Calu3 (cell line): ENCODE measurements at regions of chr5 and their contacts with region 1.

Region 1: GRCh38 chr5:169583424-169584204 is at the start of gene SPDL1:
- DNase-seq: peak; percentile 95
- H3K4me3 Mint-ChIP-seq: peak within 1 kb of the TSS; percentile 95
- H3K27ac Mint-ChIP-seq: peak within 1 kb of the TSS; percentile 90
- H3K4me1 Mint-ChIP-seq: peaks cover 26% of the 10 kb centered on the region
- H3K27me3 Mint-ChIP-seq: peaks cover 14% of the 10 kb centered on the region
- CTCF ChIP-seq: no peak
- total RNA-seq, gene SPDL1: 41.7 and 45.8 TPM in 2 replicates

Region 2: GRCh38 chr5:168579488-168580226 is 1004.0 kb before region 1 on chr5:
- CTCF ChIA-PET with region 1: no interaction called
- intact Hi-C with region 1: loop called (anchors 10 kb)
- DNase-seq: peak; percentile 99
- H3K4me3 Mint-ChIP-seq: peak overlapping the region; percentile 78
- H3K27ac Mint-ChIP-seq: peak overlapping the region; percentile 94
- H3K4me1 Mint-ChIP-seq: peaks cover 36% of the 10 kb centered on the region
- H3K27me3 Mint-ChIP-seq: peaks cover under 1% of the 10 kb centered on the region
- CTCF ChIP-seq: no peak

Region 3: DNA sequence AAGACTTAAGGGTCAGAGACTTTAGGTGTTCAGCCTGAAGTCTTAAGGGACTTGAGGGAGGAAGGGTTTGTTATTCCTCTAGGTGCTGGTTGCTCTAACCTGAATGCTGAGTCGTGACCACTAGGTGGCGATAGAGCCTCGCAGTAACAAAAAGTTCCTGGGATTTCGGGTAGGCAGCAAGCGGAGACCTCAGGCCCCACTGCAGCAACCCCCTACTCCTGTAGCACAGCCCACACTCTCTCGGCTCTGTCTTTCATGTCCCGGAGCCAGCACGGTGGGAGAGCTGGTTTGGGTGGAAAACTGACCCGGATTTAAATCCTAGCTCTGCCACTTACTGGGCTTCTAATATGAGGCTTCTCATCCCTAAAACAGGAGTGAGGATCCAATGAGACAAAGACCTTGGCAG is 904.1 kb before region 1 on chr5:
- CTCF ChIA-PET with region 1: no interaction called
- intact Hi-C with region 1: loop called (anchors 2 kb)
- DNase-seq: peak; percentile 79
- H3K4me3 Mint-ChIP-seq: no peak overlapping the region
- H3K27ac Mint-ChIP-seq: no peak overlapping the region
- H3K4me1 Mint-ChIP-seq: no peaks in the 10 kb centered on the region
- H3K27me3 Mint-ChIP-seq: peaks cover 13% of the 10 kb centered on the region
- CTCF ChIP-seq: peak; percentile 96

Region 4: DNA sequence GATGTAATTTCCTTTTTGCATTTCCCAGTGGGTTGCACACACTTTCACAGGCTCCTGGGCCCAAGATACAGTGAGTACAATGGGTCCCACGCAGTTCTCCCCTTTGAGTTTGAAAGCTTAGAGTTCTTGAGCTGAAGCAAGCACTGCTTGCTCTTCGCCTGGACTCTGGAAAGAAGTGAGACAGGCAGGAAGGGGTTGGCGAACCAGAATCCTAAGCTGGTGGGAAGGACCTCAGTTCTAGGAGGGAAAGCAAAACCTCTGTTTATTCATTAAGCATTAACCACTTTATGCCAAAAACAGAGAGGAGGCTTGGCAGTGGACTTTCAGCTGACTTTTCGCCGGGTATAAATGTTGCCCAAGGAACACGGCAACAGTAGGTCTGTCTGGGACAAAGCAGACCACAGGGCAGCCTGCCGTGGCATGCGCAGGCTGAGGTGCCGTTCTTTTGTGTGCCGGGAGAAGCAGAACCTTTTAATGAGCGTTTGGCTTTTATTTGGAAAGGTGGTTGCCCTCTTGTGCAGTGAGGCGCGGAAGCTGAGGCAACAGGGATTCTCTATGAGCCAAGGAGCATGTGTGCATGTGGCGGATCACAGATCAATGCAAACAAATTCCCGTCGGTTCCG is 764.5 kb before region 1 on chr5:
- CTCF ChIA-PET with region 1: no interaction called
- intact Hi-C with region 1: no loop called
- DNase-seq: no peak
- H3K4me3 Mint-ChIP-seq: no peak overlapping the region
- H3K27ac Mint-ChIP-seq: no peak overlapping the region
- H3K4me1 Mint-ChIP-seq: no peaks in the 10 kb centered on the region
- H3K27me3 Mint-ChIP-seq: peaks cover 100% of the 10 kb centered on the region
- CTCF ChIP-seq: no peak

Region 5: GRCh38 chr5:168947212-168947868 is 636.3 kb before region 1 on chr5:
- CTCF ChIA-PET with region 1: no interaction called
- intact Hi-C with region 1: loop called (anchors 2 kb)
- DNase-seq: peak; percentile 71
- H3K4me3 Mint-ChIP-seq: no peak overlapping the region
- H3K27ac Mint-ChIP-seq: no peak overlapping the region
- H3K4me1 Mint-ChIP-seq: no peaks in the 10 kb centered on the region
- H3K27me3 Mint-ChIP-seq: peaks cover 48% of the 10 kb centered on the region
- CTCF ChIP-seq: peak; percentile 80

Region 6: DNA sequence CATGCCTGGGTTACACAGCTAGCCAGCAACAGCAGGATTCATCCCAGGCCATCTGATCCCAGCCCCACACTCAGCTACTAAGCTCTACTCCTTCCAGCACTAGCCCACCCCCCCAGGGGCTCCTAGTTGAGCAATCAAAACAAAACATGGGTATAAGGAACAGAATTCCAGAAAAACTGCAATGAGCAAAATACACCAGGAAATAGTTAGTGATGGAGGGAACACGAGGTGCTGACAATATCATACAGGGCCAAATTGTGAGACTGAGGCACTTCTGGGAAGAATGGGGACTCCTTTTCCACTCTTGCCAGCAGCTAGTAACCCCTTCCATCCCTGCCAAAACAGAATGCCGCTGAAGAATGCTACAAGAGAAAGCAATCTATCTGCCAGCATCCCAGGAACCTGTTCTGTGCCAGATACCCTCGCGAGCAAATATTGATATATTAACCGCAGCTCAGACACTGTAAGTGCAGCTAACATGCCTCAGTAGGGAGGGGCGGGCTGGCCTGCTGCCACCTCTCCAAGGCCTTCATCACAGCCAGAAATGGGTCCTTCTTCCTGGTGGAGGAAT is 444.0 kb before region 1 on chr5:
- CTCF ChIA-PET with region 1: no interaction called
- intact Hi-C with region 1: loop called (anchors 10 kb)
- DNase-seq: peak; percentile 89
- H3K4me3 Mint-ChIP-seq: no peak overlapping the region
- H3K27ac Mint-ChIP-seq: no peak overlapping the region
- H3K4me1 Mint-ChIP-seq: peaks cover 9% of the 10 kb centered on the region
- H3K27me3 Mint-ChIP-seq: peaks cover 12% of the 10 kb centered on the region
- CTCF ChIP-seq: no peak

Region 7: DNA sequence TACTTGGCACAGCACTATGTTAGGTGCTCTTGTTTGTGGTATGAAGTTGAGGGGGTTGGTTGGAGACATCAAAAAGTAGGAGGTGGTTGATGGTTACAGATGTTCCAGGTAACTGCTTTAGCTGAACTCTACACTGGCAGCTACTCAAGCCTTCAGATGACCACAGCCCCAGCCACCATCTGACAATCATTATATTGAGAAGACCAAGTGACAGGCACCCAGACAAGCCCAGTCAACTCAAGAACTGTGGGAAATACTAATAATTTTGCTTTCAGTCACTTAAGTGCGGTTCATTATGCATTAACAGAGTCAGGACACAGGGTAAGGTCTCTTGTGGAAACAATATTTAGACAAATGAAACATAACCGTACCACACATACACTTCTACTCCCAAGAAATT is 243.7 kb before region 1 on chr5:
- CTCF ChIA-PET with region 1: no interaction called
- intact Hi-C with region 1: no loop called
- DNase-seq: no peak
- H3K4me3 Mint-ChIP-seq: no peak overlapping the region
- H3K27ac Mint-ChIP-seq: no peak overlapping the region
- H3K4me1 Mint-ChIP-seq: no peaks in the 10 kb centered on the region
- H3K27me3 Mint-ChIP-seq: no peaks in the 10 kb centered on the region
- CTCF ChIP-seq: no peak